Naive thymus-derived CD4-positive, alpha-beta T cell (primary cell): ENCODE measurements at regions of chr12 and their contacts with region 1.

Region 1: GRCh38 chr12:71888521-71888920 is 49.0 kb downstream of the TBC1D15 start:
- DNase-seq: no peak
- ATAC-seq: no peak
- H3K4me3 ChIP-seq: no peak overlapping the region
- H3K4me3 Mint-ChIP-seq: no peak overlapping the region
- H3K27ac ChIP-seq: no peak overlapping the region
- H3K27ac Mint-ChIP-seq: peak overlapping the region in 2 of 9 donors; percentile 19 to 49
- H3K4me1 ChIP-seq: no peaks in the 10 kb centered on the region
- H3K4me1 Mint-ChIP-seq: peaks cover 0 to 43% (median 34%) of the 10 kb centered on the region in 7 donors
- H3K27me3 ChIP-seq: no peaks in the 10 kb centered on the region
- H3K27me3 Mint-ChIP-seq: no peaks in the 10 kb centered on the region

Region 2: GRCh38 chr12:71870416-71870815 is 18.1 kb before region 1 on chr12:
- CTCF ChIA-PET with region 1: no interaction called
- POLR2A ChIA-PET with region 1: no interaction called
- intact Hi-C with region 1: loop called in 1 of 2 experiments (anchors 1 kb)
- DNase-seq: no peak
- ATAC-seq: no peak
- H3K4me3 ChIP-seq: no peak overlapping the region
- H3K4me3 Mint-ChIP-seq: peak overlapping the region in 2 of 10 donors; percentile 19 to 23
- H3K27ac ChIP-seq: no peak overlapping the region
- H3K27ac Mint-ChIP-seq: peak overlapping the region in 4 of 9 donors; percentile 25 to 33 (median 31)
- H3K4me1 ChIP-seq: peaks cover 6 to 10% of the 10 kb centered on the region in 2 donors
- H3K4me1 Mint-ChIP-seq: peaks cover 26 to 66% (median 58%) of the 10 kb centered on the region in 7 donors
- H3K27me3 ChIP-seq: no peaks in the 10 kb centered on the region
- H3K27me3 Mint-ChIP-seq: no peaks in the 10 kb centered on the region